ENCODE measurements at regions of chr3 and their contacts with region 1.

Region 1: GRCh38 chr3:115692887-115693524 is 69.7 kb downstream of the GAP43 start:
- DNase-seq: peak; percentile 43 to 79
- ATAC-seq: peak; percentile 72 to 90 (median 81)
- H3K4me3 ChIP-seq: no peak overlapping the region
- H3K4me3 Mint-ChIP-seq: no peak overlapping the region
- H3K27ac ChIP-seq: no peak overlapping the region
- H3K27ac Mint-ChIP-seq: no peak overlapping the region
- H3K4me1 ChIP-seq: no peaks in the 10 kb centered on the region
- H3K4me1 Mint-ChIP-seq: no peaks in the 10 kb centered on the region
- H3K27me3 ChIP-seq: no peaks in the 10 kb centered on the region
- H3K27me3 Mint-ChIP-seq: peaks cover 11 to 13% of the 10 kb centered on the region in 2 donors
- CTCF ChIP-seq: peak; percentile 81

Region 2: DNA sequence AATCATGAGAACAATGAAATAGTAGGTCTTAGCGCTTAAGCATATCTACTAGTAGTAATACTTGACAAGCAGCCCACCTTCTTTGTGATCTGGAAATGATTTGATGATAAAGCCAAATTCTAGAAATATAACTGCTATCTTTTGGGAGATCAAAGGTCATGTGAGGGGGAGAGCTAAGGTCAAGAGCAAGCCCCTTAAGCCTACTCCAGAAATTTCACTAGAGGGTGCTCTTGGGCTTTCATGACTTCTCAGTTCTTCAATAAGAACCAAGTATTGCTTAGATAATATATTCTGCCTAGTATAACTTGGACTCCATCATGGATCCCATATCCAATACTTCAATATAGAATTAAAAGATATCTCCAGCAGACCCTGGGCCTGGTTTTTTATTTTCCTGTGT is 865.5 kb before region 1 on chr3:
- intact Hi-C with region 1: loop called (anchors 2 kb)
- DNase-seq: peak in 1 of 2 donors; percentile 52
- ATAC-seq: peak; percentile 39 to 80 (median 72)
- H3K4me3 ChIP-seq: no peak overlapping the region
- H3K4me3 Mint-ChIP-seq: no peak overlapping the region
- H3K27ac ChIP-seq: no peak overlapping the region
- H3K27ac Mint-ChIP-seq: no peak overlapping the region
- H3K4me1 ChIP-seq: no peaks in the 10 kb centered on the region
- H3K4me1 Mint-ChIP-seq: peaks cover 6 to 8% of the 10 kb centered on the region in 2 donors
- H3K27me3 ChIP-seq: no peaks in the 10 kb centered on the region
- H3K27me3 Mint-ChIP-seq: no peaks in the 10 kb centered on the region
- CTCF ChIP-seq: peak; percentile 43

Region 3: GRCh38 chr3:115040673-115041286 is 652.2 kb before region 1 on chr3:
- intact Hi-C with region 1: loop called (anchors 1 kb)
- DNase-seq: peak in 1 of 2 donors; percentile 69
- ATAC-seq: peak in 2 of 3 donors; percentile 53 to 69
- H3K4me3 ChIP-seq: no peak overlapping the region
- H3K4me3 Mint-ChIP-seq: no peak overlapping the region
- H3K27ac ChIP-seq: no peak overlapping the region
- H3K27ac Mint-ChIP-seq: peak overlapping the region in 1 of 2 donors; percentile 10
- H3K4me1 ChIP-seq: no peaks in the 10 kb centered on the region
- H3K4me1 Mint-ChIP-seq: peaks cover 10 to 14% of the 10 kb centered on the region in 2 donors
- H3K27me3 ChIP-seq: no peaks in the 10 kb centered on the region
- H3K27me3 Mint-ChIP-seq: no peaks in the 10 kb centered on the region
- CTCF ChIP-seq: peak; percentile 75

Region 4: DNA sequence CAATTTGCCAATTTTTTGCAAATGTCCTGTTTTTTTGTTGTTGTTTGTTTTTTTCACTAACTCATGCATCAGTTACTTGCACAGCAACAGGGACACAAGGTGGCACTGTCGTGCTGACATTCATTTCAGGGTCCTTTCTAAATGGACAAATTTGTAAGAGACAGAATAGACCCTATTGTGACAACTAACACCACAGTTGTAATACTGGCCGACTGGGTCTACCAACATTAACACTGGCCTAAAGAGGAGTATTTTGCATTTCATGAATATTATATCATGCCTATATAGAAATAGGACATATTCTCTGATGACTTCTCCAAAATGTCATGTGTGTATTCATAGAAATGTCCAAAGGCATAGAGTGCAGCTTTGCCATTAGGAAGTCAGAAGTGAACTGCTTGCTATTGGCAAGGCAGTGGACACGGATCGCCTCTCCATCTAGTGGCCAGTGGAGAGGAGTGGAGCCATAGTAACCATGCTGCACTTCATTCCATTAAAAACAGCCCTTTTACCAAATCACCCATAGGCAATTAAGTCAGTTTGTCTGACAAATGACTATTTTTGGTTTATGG is 600.7 kb before region 1 on chr3:
- intact Hi-C with region 1: loop called (anchors 1 kb)
- DNase-seq: peak; percentile 35 to 81
- ATAC-seq: peak; percentile 64 to 70 (median 67)
- H3K4me3 ChIP-seq: no peak overlapping the region
- H3K4me3 Mint-ChIP-seq: no peak overlapping the region
- H3K27ac ChIP-seq: no peak overlapping the region
- H3K27ac Mint-ChIP-seq: no peak overlapping the region
- H3K4me1 ChIP-seq: no peaks in the 10 kb centered on the region
- H3K4me1 Mint-ChIP-seq: no peaks in the 10 kb centered on the region
- H3K27me3 ChIP-seq: no peaks in the 10 kb centered on the region
- H3K27me3 Mint-ChIP-seq: no peaks in the 10 kb centered on the region
- CTCF ChIP-seq: peak; percentile 79

Region 5: DNA sequence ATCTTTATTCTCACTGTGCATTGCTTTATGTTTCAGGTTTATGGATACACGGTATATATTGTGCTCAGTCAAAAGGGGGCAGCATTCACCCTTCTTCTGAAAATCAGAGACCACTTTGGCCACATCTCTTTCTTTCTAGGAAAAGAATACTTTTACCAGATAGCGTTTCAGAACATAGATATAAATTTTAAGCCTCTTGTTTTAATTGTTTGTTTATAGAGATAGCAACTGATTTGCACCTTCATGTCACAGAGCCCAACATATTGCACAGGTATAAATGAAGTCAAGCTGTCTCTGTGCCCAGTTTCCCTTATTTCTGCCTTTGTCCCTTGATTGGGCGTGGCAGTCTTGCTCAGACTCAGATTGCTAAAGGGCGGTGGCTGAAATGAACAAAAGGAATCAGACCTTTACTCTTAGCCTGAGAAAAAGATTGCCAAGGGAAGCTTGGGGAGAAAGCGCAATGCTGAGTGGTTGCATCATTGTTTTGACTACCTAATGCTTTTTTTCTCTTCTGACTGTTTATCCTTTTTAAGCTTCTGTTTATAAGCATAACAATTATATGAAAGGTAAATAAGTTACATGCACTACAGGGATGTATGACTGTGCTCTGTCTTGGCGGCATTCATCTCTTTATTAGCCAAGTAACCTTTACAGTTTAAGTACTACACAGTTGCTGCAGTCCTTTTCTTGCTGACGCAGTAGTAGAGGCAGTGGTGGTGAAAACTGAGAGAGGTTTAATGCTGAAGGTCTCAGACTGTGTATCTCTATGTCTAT is 475.1 kb before region 1 on chr3:
- intact Hi-C with region 1: loop called (anchors 5 kb)
- DNase-seq: peak in 1 of 2 donors; percentile 50
- ATAC-seq: peak in 1 of 3 donors; percentile 52
- H3K4me3 ChIP-seq: no peak overlapping the region
- H3K4me3 Mint-ChIP-seq: no peak overlapping the region
- H3K27ac ChIP-seq: no peak overlapping the region
- H3K27ac Mint-ChIP-seq: no peak overlapping the region
- H3K4me1 ChIP-seq: no peaks in the 10 kb centered on the region
- H3K4me1 Mint-ChIP-seq: no peaks in the 10 kb centered on the region
- H3K27me3 ChIP-seq: no peaks in the 10 kb centered on the region
- H3K27me3 Mint-ChIP-seq: peaks cover 9 to 35% of the 10 kb centered on the region in 2 donors
- CTCF ChIP-seq: peak; percentile 21

Region 6: GRCh38 chr3:115644391-115644790 is 48.6 kb before region 1 on chr3:
- intact Hi-C with region 1: no loop called
- DNase-seq: no peak
- ATAC-seq: no peak
- H3K4me3 ChIP-seq: no peak overlapping the region
- H3K4me3 Mint-ChIP-seq: no peak overlapping the region
- H3K27ac ChIP-seq: no peak overlapping the region
- H3K27ac Mint-ChIP-seq: no peak overlapping the region
- H3K4me1 ChIP-seq: no peaks in the 10 kb centered on the region
- H3K4me1 Mint-ChIP-seq: no peaks in the 10 kb centered on the region
- H3K27me3 ChIP-seq: peaks cover 4% of the 10 kb centered on the region
- H3K27me3 Mint-ChIP-seq: peaks cover 31 to 46% of the 10 kb centered on the region in 2 donors
- CTCF ChIP-seq: no peak

Region 7: DNA sequence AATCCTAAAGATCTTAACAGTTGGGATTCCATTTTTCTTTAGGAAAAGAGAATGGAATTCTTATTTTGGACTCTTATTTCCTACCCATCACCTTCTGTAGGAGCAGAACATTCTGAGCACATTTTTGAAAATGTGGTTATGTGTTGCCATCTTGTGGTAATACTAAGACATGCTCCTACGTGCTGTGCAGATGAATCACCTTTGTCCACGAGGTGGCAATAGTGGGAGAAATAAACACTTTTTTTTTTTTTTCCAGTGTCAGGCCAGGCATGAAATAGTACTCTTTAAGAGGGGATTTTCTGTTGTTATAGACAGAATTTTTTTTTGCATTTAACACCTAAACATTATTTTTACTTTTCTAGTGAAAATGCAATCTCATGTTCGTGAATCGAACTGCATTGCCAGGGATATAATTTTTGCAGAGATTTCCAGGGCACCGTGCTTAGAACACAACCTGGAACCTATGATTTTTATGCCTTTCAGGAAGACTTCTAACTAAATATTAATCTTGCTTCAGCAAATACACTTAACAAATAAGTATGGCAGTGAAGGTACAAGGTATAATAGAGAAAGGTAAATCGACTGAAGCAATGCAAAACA is 126.9 kb after region 1 on chr3:
- intact Hi-C with region 1: loop called (anchors 10 kb)
- DNase-seq: peak; percentile 44 to 88
- ATAC-seq: peak; percentile 92 to 98 (median 95)
- H3K4me3 ChIP-seq: no peak overlapping the region
- H3K4me3 Mint-ChIP-seq: no peak overlapping the region
- H3K27ac ChIP-seq: no peak overlapping the region
- H3K27ac Mint-ChIP-seq: no peak overlapping the region
- H3K4me1 ChIP-seq: no peaks in the 10 kb centered on the region
- H3K4me1 Mint-ChIP-seq: no peaks in the 10 kb centered on the region
- H3K27me3 ChIP-seq: no peaks in the 10 kb centered on the region
- H3K27me3 Mint-ChIP-seq: no peaks in the 10 kb centered on the region
- CTCF ChIP-seq: peak; percentile 100

Measured in natural killer cell (primary cell).